Activated T-helper 2 cell treated with anti-CD3 and anti-CD28 coated beads, Interferon-gamma antibody, Interleukin-2, Interleukin-4, amounts not matched to agents 10 μg/mL and 5 μg/mL and 100 μg/mL, durations not matched to agents 14 hours and 24 hours and 36 hours (primary cell): ENCODE measurements at regions of chr13 and their contacts with region 1.

Region 1: GRCh38 chr13:87998081-87998480 is 326.9 kb downstream of the SLITRK5 start:
- DNase-seq: no peak
- H3K4me3 Mint-ChIP-seq: no peak overlapping the region
- H3K27ac Mint-ChIP-seq: no peak overlapping the region
- H3K4me1 Mint-ChIP-seq: no peaks in the 10 kb centered on the region
- H3K27me3 Mint-ChIP-seq: no peaks in the 10 kb centered on the region

Region 2: DNA sequence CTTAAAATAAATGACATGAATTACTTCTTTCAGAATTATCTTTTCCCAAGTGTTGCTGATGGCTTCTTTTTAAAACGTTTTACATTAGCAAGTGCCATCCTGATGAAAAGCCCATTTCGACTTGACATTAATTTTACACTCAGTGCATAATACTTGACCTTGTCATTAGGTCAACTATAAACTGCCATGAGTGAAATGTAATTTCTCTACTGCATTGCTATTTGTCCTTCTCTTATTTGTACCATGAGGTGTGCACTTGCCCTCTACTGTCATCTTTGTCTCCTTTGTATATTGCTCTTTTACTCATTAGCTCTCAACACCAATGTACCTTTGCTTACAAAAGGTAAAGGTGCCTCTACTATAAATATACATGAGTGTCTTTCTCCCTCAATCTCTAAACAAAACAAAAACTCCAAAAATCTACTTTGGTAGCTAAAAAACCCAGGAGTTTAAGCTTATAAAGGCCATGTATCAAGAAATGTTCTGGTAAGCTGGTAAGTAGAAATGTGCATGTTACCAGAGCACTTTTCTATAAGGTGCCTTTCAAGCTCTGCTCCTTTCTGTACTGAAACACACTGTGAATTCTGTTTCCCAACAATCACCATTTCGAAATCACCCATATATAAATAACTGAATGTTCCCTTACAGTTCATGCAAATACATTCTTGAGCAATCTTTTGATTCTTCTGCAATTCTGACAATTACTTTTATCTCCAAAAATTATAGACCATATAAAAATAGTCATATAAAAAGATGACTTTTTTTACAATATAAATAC is 24.5 kb after region 1 on chr13:
- intact Hi-C with region 1: loop called (anchors 2 kb)
- DNase-seq: no peak
- H3K4me3 Mint-ChIP-seq: no peak overlapping the region
- H3K27ac Mint-ChIP-seq: no peak overlapping the region
- H3K4me1 Mint-ChIP-seq: no peaks in the 10 kb centered on the region
- H3K27me3 Mint-ChIP-seq: no peaks in the 10 kb centered on the region